Transverse colon (tissue), 4 donors: ENCODE measurements at regions of chr2 and their contacts with region 1.

Region 1: GRCh38 chr2:221573430-221574230 is 1.5 kb upstream of the EPHA4 start:
- DNase-seq: peak; percentile 89
- H3K4me3 ChIP-seq: peak overlapping the region; percentile 58 to 76 (median 69)
- H3K27ac ChIP-seq: peak overlapping the region; percentile 86 to 90 (median 90)
- H3K4me1 ChIP-seq: peaks cover 6 to 35% (median 19%) of the 10 kb centered on the region in 4 donors
- H3K27me3 ChIP-seq: peaks cover 26% of the 10 kb centered on the region
- CTCF ChIP-seq: peak; percentile 97 to 99 (median 98)
- EP300 ChIP-seq: no peak
- POLR2A ChIP-seq: no peak

Region 2: GRCh38 chr2:220687231-220687843 is 886.3 kb before region 1 on chr2:
- in situ Hi-C with region 1: loop called (anchors 5 to 10 kb)
- intact Hi-C with region 1: loop called (anchors 1 kb)
- DNase-seq: peak; percentile 75
- H3K4me3 ChIP-seq: no peak overlapping the region
- H3K27ac ChIP-seq: no peak overlapping the region
- H3K4me1 ChIP-seq: no peaks in the 10 kb centered on the region
- H3K27me3 ChIP-seq: no peaks in the 10 kb centered on the region
- CTCF ChIP-seq: peak; percentile 84 to 86 (median 85)
- EP300 ChIP-seq: no peak
- POLR2A ChIP-seq: no peak

Region 3: DNA sequence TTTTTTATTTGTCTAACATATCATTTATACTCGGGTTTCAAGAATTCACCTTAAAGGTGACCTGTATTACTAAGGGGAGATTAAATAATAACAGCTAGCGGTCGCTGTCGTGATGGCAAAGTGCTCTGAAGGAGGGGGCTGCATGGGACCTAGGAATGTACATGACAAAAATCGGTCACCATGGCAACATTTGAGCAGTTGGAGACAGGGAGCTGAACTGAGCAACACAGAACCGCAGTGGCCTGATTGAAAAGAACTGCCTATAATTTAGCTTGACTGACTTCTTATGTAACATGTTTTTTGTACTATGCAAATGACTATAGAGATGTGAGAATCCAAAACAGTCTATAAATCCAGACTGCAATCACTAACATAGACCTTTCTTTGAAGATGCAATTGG is 32.8 kb after region 1 on chr2:
- in situ Hi-C with region 1: no loop called
- intact Hi-C with region 1: no loop called
- DNase-seq: no peak
- H3K4me3 ChIP-seq: no peak overlapping the region
- H3K27ac ChIP-seq: no peak overlapping the region
- H3K4me1 ChIP-seq: no peaks in the 10 kb centered on the region
- H3K27me3 ChIP-seq: no peaks in the 10 kb centered on the region
- CTCF ChIP-seq: no peak
- EP300 ChIP-seq: no peak
- POLR2A ChIP-seq: no peak

Region 4: GRCh38 chr2:221705185-221705877 is 131.7 kb after region 1 on chr2:
- in situ Hi-C with region 1: no loop called
- intact Hi-C with region 1: loop called (anchors 5 kb)
- DNase-seq: peak; percentile 41
- H3K4me3 ChIP-seq: no peak overlapping the region
- H3K27ac ChIP-seq: peak overlapping the region in 3 of 4 donors; percentile 4 to 49 (median 39)
- H3K4me1 ChIP-seq: peaks cover 3 to 14% (median 7%) of the 10 kb centered on the region in 4 donors
- H3K27me3 ChIP-seq: no peaks in the 10 kb centered on the region
- CTCF ChIP-seq: no peak
- EP300 ChIP-seq: no peak
- POLR2A ChIP-seq: no peak

Region 5: GRCh38 chr2:221876016-221876415 is 302.4 kb after region 1 on chr2:
- in situ Hi-C with region 1: no loop called
- intact Hi-C with region 1: no loop called
- DNase-seq: no peak
- H3K4me3 ChIP-seq: no peak overlapping the region
- H3K27ac ChIP-seq: no peak overlapping the region
- H3K4me1 ChIP-seq: no peaks in the 10 kb centered on the region
- H3K27me3 ChIP-seq: no peaks in the 10 kb centered on the region
- CTCF ChIP-seq: no peak
- EP300 ChIP-seq: no peak
- POLR2A ChIP-seq: no peak

Region 6: GRCh38 chr2:221969087-221969829 is 395.6 kb after region 1 on chr2:
- in situ Hi-C with region 1: no loop called
- intact Hi-C with region 1: loop called (anchors 5 kb)
- DNase-seq: no peak
- H3K4me3 ChIP-seq: no peak overlapping the region
- H3K27ac ChIP-seq: no peak overlapping the region
- H3K4me1 ChIP-seq: no peaks in the 10 kb centered on the region
- H3K27me3 ChIP-seq: no peaks in the 10 kb centered on the region
- CTCF ChIP-seq: peak; percentile 53 to 65 (median 56)
- EP300 ChIP-seq: no peak
- POLR2A ChIP-seq: no peak